A549 (cell line): ENCODE measurements at regions of chr16 and their contacts with region 1.

Region 1: DNA sequence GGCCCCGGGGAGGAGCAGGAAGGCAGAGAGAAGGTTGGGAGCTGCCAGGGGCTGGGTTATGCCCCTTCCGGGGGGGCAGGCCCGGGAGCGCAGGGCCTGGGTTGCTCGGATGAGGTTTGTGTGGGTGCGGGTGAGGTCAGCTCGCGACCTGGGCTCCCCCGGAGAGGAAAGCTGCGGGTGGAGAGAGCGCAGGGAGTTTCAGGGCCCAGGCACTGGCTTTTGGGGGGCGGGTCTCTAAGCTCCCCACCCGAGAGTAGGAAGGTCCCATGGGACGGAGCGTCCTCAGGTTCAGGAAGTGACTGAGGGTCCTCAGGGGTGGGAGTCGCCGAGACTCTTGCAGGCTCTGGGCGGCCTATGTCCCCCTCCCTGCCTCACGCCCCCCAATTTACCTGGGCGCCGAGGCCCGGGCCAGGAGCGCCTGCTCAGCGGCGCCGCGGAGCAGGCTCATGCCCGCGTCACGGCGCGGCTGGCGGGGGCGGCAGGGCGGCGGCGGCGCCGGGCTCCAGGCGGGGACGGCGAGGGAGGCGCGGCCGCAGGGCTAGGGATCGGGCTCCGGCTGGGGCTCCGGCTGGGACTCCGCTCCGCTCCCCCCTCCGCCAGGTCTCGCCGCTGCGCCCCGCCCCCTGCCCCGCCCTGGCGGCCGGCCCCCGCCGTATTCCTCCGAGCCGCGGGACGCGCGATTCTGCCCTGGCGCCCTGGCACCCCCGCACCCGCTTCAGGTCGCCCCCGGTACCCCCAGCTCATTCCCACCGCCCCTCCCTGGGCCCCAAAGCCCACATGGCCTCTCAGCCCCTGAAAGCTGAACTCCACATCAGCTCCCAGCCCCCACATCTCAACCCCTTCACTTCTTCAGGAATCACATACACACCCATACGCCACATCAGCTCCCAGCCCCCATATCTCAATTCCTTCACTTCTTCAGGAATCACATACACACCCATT is at the start of gene DOK4:
- DNase-seq: peak; percentile 47 to 89
- ATAC-seq: peak; percentile 94 to 96
- H3K4me3 ChIP-seq: peak within 1 kb of the TSS; percentile 100
- H3K27ac ChIP-seq: peak within 1 kb of the TSS; percentile 94 to 98
- H3K4me1 ChIP-seq: peaks cover 45% of the 10 kb centered on the region
- CTCF ChIP-seq: no peak
- EP300 ChIP-seq: no peak
- POLR2A ChIP-seq: peak; percentile 66
- RAD21 ChIP-seq: no peak
- polyA plus RNA-seq, gene DOK4: 85.4 and 93.2 TPM in 2 replicates

Region 2: GRCh38 chr16:57475711-57476339 is 10.4 kb before region 1 on chr16:
- CTCF ChIA-PET with region 1: interaction called, 70 read pairs
- POLR2A ChIA-PET with region 1: interaction called, 15 read pairs
- DNase-seq: peak; percentile 77 to 82
- ATAC-seq: peak; percentile 44 to 69
- H3K4me3 ChIP-seq: peak overlapping the region; percentile 21; the same call in 1 of the 3 replicates
- H3K27ac ChIP-seq: peak overlapping the region; percentile 96 to 98
- H3K4me1 ChIP-seq: peaks cover 97% of the 10 kb centered on the region
- CTCF ChIP-seq: peak; percentile 58
- EP300 ChIP-seq: no peak
- POLR2A ChIP-seq: no peak
- RAD21 ChIP-seq: peak in 1 of 2 experiments; percentile 59; a peak in 4 of 5 replicates